HCT116 (cell line): ENCODE measurements at regions of chr14 and their contacts with region 1.

Region 1: GRCh38 chr14:102437997-102438915 is 71.3 kb downstream of the ANKRD9 start:
- DNase-seq: peak; percentile 59
- ATAC-seq: peak; percentile 98
- H3K4me3 ChIP-seq: peak overlapping the region; percentile 18 to 37; a peak in 2 of 4 replicates
- H3K27ac ChIP-seq: no peak overlapping the region
- H3K4me1 ChIP-seq: peaks cover 2 to 11% of the 10 kb centered on the region in 2 experiments; a peak in 3 of 4 replicates
- H3K27me3 ChIP-seq: no peaks in the 10 kb centered on the region
- CTCF ChIP-seq: peak; percentile 76 to 81 (median 76)
- POLR2A ChIP-seq: no peak
- RAD21 ChIP-seq: peak; percentile 94

Region 2: GRCh38 chr14:102370305-102370809 is 67.9 kb before region 1 on chr14:
- CTCF ChIA-PET with region 1: no interaction called
- POLR2A ChIA-PET with region 1: no interaction called
- RAD21 ChIA-PET with region 1: no interaction called
- intact Hi-C with region 1: no loop called
- DNase-seq: no peak
- ATAC-seq: no peak
- H3K4me3 ChIP-seq: no peak overlapping the region
- H3K27ac ChIP-seq: no peak overlapping the region
- H3K4me1 ChIP-seq: no peaks in the 10 kb centered on the region
- H3K27me3 ChIP-seq: no peaks in the 10 kb centered on the region
- CTCF ChIP-seq: no peak
- POLR2A ChIP-seq: no peak
- RAD21 ChIP-seq: no peak

Region 3: DNA sequence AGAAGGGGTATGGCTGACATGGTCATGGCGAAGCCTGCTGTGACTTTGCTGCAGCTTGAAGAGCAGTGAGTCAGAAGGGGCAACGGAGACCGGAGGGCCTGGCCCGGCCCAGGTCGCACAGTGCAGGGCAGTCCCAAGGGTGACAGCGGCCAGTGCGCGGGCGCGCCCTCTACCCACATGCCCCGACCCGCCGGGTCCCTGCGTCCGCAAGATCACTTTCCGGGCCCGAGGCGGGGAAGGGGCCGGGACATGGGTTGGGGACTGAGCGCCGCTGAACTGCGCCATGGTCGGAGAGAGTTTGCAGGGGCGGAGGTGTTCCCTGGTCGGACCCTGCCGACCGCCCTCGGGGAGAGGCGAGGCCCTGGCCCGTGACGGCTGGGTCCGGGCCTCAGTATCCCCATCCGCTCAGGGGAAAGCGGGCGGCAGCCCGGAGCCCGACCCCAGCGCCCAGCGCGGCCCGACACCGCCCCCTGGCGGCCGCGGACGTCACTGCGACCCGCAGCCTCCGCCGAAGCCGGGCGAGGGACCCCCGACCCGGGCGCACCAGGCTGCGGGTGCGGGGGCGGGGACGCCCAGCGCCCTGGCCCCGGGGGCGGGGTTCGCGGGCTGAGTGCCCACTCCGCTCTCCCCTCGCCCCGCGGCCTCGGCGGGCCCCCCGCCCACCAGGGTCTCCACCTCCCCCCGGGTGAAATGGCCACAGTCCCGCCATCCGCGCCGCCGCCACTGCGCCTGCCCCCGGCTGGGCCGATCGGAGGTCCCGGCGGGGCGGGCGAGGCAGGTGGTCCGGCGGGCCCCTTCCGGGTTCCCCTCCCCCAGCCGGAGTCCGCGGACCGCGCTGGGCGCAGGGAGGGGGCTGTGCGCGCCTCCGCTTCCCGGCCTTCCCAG is 78.5 kb after region 1 on chr14:
- CTCF ChIA-PET with region 1: interaction called, 10 read pairs
- POLR2A ChIA-PET with region 1: interaction called, 3 read pairs
- RAD21 ChIA-PET with region 1: interaction called in 1 of 2 experiments, 4 read pairs
- intact Hi-C with region 1: loop called (anchors 1 kb)
- DNase-seq: no peak
- ATAC-seq: peak; percentile 87
- H3K4me3 ChIP-seq: peak overlapping the region; percentile 10 to 55
- H3K27ac ChIP-seq: no peak overlapping the region; the same call in 1 of the 2 replicates
- H3K4me1 ChIP-seq: peaks cover under 1 to 5% of the 10 kb centered on the region in 2 experiments
- H3K27me3 ChIP-seq: no peaks in the 10 kb centered on the region
- CTCF ChIP-seq: peak in 2 of 3 experiments; percentile 60 to 68; a peak in 4 of 6 replicates
- POLR2A ChIP-seq: no peak
- RAD21 ChIP-seq: no peak

Region 4: DNA sequence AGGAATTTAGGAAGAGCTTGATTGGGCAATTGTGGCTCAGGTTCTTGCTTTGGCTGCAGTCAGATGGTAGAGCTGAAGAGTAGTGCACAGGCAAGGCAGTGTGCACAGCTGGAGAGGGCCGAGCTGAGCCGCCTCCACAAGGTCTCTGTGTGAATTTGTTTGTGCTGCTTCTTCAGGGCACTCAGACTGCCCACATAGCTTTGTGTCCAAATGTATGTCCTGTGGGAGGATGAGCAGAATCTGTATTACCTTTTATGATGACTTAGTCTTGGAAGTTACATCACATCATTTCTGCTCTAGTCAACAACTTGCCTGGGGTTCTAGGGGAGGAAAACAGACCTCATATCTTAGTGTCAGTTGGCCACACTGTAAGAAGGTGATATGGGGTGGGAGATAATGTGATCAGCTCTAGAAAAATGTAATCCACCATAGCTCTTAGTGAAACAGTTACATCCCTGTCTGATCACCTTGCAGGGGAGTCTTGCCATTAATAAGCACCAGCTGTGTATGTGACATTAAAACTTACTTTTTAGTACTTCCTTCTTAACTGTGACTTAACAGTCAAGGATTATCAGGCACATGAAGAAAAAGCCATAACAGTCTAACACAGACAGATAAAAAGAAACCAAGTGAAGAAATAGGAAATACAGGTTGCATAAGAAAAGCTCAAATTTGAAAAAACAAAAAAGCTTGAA is 207.6 kb after region 1 on chr14:
- CTCF ChIA-PET with region 1: no interaction called
- POLR2A ChIA-PET with region 1: no interaction called
- RAD21 ChIA-PET with region 1: no interaction called
- intact Hi-C with region 1: no loop called
- DNase-seq: no peak
- ATAC-seq: no peak
- H3K4me3 ChIP-seq: no peak overlapping the region
- H3K27ac ChIP-seq: no peak overlapping the region
- H3K4me1 ChIP-seq: no peaks in the 10 kb centered on the region
- H3K27me3 ChIP-seq: no peaks in the 10 kb centered on the region
- CTCF ChIP-seq: no peak
- POLR2A ChIP-seq: no peak
- RAD21 ChIP-seq: no peak

Region 5: DNA sequence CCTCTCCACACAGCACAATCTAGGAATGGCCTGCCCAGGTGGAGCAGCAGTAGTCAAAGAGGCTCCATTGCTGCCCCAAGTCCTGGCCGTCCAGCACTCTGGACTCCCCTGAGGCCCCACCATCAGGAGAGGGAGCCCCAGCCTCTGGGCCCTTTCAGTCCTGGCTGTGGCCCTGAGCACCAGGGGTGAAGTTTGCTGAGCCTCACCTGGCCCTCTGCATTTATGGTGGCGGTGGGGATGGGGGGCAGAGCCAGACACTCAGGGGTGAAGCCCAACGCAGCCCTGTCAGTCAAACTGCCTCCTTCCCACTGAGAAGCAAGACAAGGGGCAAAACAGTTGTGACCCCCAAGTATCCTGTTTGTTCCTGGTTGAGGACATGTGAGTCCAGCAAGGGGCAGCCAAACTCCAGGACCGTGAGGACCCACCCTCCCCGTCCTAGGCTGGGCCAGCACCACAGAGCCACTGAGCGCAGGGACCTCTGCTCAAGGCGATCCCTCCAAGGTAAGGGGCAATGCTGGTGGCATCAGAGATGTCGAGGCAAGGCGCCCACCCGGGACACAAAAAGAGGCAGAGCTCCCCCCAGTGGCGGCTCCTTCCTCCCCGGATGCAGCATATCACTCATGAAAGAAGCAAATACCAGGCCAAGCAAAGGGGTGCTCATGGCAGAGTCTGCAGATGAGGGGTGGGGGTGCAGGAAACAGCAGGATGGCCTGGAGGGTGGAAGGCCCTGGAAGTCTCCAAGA is 479.4 kb after region 1 on chr14:
- CTCF ChIA-PET with region 1: no interaction called
- POLR2A ChIA-PET with region 1: no interaction called
- RAD21 ChIA-PET with region 1: no interaction called
- intact Hi-C with region 1: loop called (anchors 5 kb)
- DNase-seq: peak; percentile 18
- ATAC-seq: peak; percentile 71
- H3K4me3 ChIP-seq: no peak overlapping the region
- H3K27ac ChIP-seq: no peak overlapping the region
- H3K4me1 ChIP-seq: no peaks in the 10 kb centered on the region
- H3K27me3 ChIP-seq: no peaks in the 10 kb centered on the region
- CTCF ChIP-seq: peak; percentile 75 to 79 (median 78)
- POLR2A ChIP-seq: no peak
- RAD21 ChIP-seq: peak; percentile 90